Mammary epithelial cell (primary cell): ENCODE measurements at regions of chr22 and their contacts with region 1.

Region 1: DNA sequence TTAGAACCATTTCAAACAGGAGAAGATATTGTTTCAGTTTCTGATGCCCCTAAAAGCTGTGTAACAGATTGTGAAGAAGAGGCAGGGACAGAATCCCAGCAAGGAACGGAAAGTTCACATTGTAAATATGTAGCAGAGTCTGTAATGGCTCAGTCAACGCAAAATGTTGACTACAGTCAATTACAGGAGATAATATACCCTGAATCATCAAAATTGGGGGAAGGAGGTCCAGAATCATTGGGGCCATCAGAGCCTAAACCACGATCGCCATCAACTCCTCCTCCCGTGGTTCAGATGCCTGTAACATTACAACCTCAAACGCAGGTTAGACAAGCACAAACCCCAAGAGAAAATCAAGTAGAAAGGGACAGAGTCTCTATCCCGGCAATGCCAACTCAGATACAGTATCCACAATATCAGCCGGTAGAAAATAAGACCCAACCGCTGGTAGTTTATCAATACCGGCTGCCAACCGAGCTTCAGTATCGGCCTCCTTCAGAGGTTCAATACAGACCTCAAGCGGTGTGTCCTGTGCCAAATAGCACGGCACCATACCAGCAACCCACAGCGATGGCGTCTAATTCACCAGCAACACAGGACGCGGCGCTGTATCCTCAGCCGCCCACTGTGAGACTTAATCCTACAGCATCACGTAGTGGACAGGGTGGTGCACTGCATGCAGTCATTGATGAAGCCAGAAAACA is 40.8 kb downstream of the IGLL1 start:
- DNase-seq: peak; percentile 70
- H3K4me3 ChIP-seq: peak overlapping the region in 2 of 3 experiments; percentile 6 to 29
- H3K27ac ChIP-seq: no peak overlapping the region
- H3K4me1 ChIP-seq: no peaks in the 10 kb centered on the region
- H3K27me3 ChIP-seq: peaks cover 2% of the 10 kb centered on the region
- CTCF ChIP-seq: peak; percentile 86 to 93

Region 2: GRCh38 chr22:23289851-23290724 is 249.2 kb before region 1 on chr22:
- CTCF ChIA-PET with region 1: no interaction called
- dilution Hi-C with region 1: loop called (anchors 5 kb)
- in situ Hi-C with region 1: no loop called
- intact Hi-C with region 1: no loop called
- DNase-seq: peak; percentile 41
- H3K4me3 ChIP-seq: no peak overlapping the region
- H3K27ac ChIP-seq: no peak overlapping the region
- H3K4me1 ChIP-seq: no peaks in the 10 kb centered on the region
- H3K27me3 ChIP-seq: no peaks in the 10 kb centered on the region
- CTCF ChIP-seq: peak; percentile 72 to 82

Region 3: GRCh38 chr22:23385291-23386244 is 153.7 kb before region 1 on chr22:
- CTCF ChIA-PET with region 1: no interaction called
- dilution Hi-C with region 1: no loop called
- in situ Hi-C with region 1: no loop called
- intact Hi-C with region 1: loop called (anchors 5 kb)
- DNase-seq: peak; percentile 49
- H3K4me3 ChIP-seq: no peak overlapping the region
- H3K27ac ChIP-seq: no peak overlapping the region
- H3K4me1 ChIP-seq: no peaks in the 10 kb centered on the region
- H3K27me3 ChIP-seq: no peaks in the 10 kb centered on the region
- CTCF ChIP-seq: peak; percentile 96 to 98

Region 4: DNA sequence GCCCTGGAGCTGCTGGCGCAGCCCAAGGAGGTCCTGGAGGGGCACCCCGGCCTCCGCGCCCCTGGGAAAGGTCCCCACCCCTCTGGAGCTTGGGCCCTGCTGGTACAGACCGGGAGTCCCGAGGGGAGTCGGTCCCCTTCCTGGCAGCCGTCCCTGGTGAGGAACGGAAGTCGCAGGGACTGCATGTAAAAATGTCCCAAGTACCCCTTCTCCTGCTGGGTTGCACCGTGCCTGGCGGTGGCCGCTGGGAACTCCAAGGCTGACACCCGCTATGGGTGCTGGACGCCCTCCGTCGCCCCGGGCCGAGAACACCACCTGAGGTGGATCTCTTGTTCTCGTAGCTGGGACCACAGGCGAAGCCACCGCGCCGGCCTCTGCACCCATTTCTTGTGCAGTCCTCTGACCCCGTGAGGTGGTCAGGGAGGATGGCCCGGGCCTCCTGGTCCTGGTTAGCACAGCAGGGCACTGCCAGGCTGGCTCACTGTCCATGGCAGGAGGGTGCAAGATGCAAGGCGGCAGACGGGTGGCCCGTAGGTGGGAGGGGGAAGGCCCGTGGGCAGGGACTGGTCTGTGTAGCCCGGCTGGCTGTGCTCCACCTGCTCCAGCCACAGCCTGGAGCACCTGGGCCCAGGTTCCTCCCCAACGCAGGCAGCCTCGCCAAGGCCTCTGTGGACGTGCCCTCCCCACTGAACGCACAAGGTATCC is 124.4 kb before region 1 on chr22:
- CTCF ChIA-PET with region 1: no interaction called
- dilution Hi-C with region 1: no loop called
- in situ Hi-C with region 1: loop called in 1 of 2 experiments (anchors 10 kb)
- intact Hi-C with region 1: no loop called
- DNase-seq: no peak
- H3K4me3 ChIP-seq: no peak overlapping the region
- H3K27ac ChIP-seq: no peak overlapping the region
- H3K4me1 ChIP-seq: no peaks in the 10 kb centered on the region
- H3K27me3 ChIP-seq: no peaks in the 10 kb centered on the region
- CTCF ChIP-seq: no peak

Region 5: DNA sequence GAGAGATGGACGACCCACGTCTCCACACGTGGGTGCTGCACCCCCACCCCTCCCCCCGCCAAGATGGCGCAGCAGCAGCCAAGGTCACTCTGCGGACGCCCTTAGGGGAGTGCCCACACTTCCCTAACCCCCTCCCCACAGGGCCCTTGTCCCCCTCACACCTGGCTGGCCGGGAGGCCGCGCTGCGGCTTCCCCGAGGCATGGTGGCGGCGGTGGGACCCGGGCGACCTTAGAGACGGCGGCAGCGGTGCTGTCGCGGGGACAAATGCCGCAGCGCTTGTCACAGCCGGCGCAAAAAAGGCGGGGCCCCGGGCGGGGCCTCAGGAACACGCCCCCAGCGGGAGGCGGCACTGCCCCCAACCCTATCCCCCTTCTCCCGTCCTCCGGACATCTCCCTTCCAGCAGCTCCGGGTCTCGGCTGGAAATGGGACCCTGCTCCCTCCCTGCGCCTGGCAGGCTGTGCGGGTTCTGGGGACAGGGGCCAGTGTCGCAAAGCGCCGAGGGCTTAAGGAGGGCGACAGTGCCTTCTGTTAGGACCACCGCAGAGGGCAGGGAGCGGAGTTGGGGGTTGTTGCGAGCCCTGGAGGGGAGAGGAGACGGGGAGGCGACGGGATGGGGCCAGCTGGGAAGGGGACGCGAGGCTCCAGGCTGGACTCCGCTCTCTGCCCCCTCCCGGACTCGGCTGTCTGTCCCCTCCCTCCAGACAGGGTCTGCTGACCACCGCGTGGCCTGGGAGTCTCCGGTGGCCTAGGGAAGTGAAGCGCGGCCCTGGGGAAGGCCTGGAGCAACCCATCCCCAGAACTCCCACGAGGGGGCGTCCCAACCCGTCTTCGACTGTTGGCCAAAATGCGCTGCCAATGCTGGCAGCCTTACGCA is 228.6 kb after region 1 on chr22 and contains the start of gene CHCHD10:
- CTCF ChIA-PET with region 1: no interaction called
- dilution Hi-C with region 1: no loop called
- in situ Hi-C with region 1: no loop called
- intact Hi-C with region 1: loop called (anchors 5 kb)
- DNase-seq: no peak
- H3K4me3 ChIP-seq: peak within 1 kb of the TSS; percentile 67 to 87 (median 82)
- H3K27ac ChIP-seq: no peak within 1 kb of the TSS
- H3K4me1 ChIP-seq: peaks cover 20% of the 10 kb centered on the region
- H3K27me3 ChIP-seq: no peaks in the 10 kb centered on the region
- CTCF ChIP-seq: peak; percentile 56 to 84
- total RNA-seq, gene CHCHD10: 17.3 to 71.6 TPM

Region 6: DNA sequence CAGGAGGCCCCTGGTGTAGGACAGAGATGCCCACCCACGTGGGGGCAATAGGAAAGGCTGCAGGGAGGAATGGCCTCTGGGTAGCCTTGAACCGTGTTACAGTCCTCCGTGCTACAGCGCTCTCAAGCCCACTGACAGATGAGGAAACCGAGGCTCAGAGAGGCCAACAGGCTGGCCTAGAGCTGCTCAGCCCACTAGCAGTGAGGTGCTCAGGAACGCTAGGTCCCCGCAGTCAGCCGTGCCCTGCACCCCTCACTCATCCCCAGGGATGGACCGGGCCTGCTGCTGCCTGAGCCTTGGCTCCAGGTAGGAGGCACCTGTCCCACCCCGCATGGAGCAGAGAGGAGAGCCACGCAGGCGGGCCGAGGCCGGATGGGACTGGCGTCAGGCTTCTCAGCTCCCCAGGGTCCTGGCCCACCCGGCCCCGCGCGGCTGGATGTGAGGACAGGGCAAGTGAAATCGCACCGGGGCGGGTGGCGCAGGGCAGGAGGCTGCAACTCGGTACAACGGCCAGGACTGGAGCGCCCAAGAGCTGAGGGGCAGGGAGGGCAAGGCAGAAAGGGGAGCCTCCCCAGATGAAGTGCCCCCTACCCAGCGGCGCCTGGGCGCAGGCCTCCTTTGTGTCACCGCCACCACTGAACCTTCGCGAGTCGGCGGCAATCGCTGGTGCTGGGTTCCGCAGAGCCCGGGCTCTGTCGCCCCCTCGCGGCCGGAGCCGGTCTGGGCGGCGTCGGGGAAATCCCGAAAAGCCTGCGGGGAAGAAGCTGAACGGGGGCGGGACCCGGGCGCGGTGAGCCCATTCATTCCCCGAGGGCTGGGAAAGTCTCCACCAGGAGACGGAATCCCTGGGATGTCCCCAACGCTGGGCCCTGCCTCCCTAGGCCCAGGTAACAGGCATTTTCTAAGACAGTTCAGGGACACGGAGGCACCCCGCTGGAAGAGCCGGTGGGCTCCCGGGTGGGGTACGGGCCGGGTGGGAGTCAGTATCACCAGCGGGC is 310.0 kb after region 1 on chr22:
- CTCF ChIA-PET with region 1: interaction called, 5 read pairs
- dilution Hi-C with region 1: no loop called
- in situ Hi-C with region 1: loop called (anchors 10 to 25 kb)
- intact Hi-C with region 1: loop called (anchors 5 kb)
- DNase-seq: peak; percentile 73
- H3K4me3 ChIP-seq: peak overlapping the region in 2 of 3 experiments; percentile 25 to 37
- H3K27ac ChIP-seq: no peak overlapping the region
- H3K4me1 ChIP-seq: peaks cover 38% of the 10 kb centered on the region
- H3K27me3 ChIP-seq: no peaks in the 10 kb centered on the region
- CTCF ChIP-seq: peak; percentile 74 to 98